Natural killer cell (primary cell): ENCODE measurements at regions of chr12 and their contacts with region 1.

Region 1: DNA sequence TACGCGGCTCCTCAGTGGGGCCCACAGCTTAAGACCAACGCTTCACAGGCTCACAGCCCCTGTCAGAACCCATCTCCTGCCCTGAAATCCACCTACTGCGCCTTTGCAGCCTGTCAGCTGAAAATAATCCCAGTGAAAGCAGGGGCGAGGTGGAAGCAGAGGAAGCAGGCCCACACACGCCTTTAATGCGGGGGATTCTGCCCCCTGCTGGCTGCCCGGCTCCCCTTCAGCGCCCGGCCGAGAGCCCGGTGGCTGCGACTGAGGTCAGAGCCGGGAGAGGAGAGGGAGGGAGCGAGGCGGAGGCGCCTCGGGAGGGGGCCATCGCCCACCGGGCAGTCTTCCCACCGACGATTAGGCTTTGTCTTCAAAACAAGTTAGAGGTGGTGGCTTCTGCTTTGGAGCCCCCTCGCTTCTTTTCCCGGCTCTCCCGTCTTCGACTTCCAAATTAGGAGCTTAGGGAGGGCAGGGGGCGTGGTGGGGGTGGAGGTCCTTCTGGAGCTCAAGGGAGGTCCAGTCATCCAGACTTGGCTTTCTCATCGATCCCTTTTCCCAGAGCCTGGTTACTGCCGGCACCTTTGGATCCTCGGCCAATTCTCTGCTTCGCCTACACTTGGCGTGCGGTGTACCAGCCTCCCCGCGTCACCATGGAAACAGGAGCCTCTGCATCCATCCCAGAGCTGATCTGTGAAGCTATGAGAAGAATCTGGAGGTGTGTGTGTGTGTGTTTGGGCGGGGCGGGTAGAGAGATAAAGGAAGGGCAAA is 25.2 kb upstream of the RND1 start:
- DNase-seq: peak; percentile 70 to 86
- ATAC-seq: peak; percentile 83 to 99 (median 98)
- H3K4me3 ChIP-seq: no peak overlapping the region
- H3K4me3 Mint-ChIP-seq: no peak overlapping the region
- H3K27ac ChIP-seq: no peak overlapping the region
- H3K27ac Mint-ChIP-seq: no peak overlapping the region
- H3K4me1 ChIP-seq: peaks cover 9% of the 10 kb centered on the region
- H3K4me1 Mint-ChIP-seq: peaks cover 0 to 5% of the 10 kb centered on the region in 2 donors
- H3K27me3 ChIP-seq: peaks cover 11% of the 10 kb centered on the region
- H3K27me3 Mint-ChIP-seq: peaks cover 7 to 18% of the 10 kb centered on the region in 2 donors
- CTCF ChIP-seq: peak; percentile 90

Region 2: DNA sequence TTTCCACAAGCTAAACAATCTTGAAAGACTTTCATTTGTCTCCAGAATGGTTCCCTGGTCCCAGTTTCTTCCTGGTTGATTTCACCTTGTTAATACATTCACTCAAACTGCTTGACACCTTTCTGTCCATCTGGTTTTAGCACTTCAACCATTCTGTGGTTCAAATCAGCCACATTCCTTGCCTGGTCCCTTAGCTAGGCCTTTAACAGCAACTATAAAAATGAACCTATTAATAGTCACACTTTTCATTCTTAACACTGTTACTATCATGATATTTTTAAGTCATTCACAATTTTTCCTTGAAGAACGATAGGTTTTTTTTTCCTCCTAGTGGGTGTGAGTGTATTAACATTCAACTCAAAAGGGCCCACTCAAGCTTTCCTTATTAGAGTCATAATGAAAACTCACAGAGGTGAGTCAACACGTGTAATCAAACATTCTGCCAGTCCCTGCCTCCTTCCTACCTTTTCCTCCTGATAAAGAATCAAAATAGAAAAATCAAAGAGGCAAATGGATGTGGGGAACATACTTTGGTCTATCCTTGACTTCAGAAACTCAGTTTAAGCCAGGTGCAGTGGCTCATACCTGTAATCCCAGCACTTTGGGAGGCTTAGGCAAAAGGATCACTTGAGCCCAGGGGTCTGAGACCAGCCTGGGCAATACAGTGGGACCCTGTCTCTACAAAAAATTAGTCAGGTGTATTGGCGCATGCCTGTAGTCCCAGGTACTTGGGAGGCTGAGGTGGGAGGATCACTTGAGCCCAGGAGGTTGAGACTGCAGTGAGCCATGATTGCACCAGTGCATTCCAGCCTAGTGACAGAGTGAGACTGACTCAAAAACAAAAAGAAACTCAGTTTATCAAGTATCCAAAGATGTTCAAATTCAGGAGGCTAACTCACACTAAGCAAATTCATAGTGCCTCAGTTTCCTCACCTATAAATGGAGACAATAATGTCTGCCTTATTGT is 139.8 kb before region 1 on chr12:
- intact Hi-C with region 1: loop called (anchors 5 kb)
- DNase-seq: no peak
- ATAC-seq: peak in 1 of 3 donors; percentile 45
- H3K4me3 ChIP-seq: no peak overlapping the region
- H3K4me3 Mint-ChIP-seq: no peak overlapping the region
- H3K27ac ChIP-seq: no peak overlapping the region
- H3K27ac Mint-ChIP-seq: no peak overlapping the region
- H3K4me1 ChIP-seq: peaks cover 7% of the 10 kb centered on the region
- H3K4me1 Mint-ChIP-seq: peaks cover 7 to 12% of the 10 kb centered on the region in 2 donors
- H3K27me3 ChIP-seq: peaks cover 2% of the 10 kb centered on the region
- H3K27me3 Mint-ChIP-seq: peaks cover 6 to 11% of the 10 kb centered on the region in 2 donors
- CTCF ChIP-seq: no peak